ENCODE measurements at regions of chr1 and their contacts with region 1.

Region 1: DNA sequence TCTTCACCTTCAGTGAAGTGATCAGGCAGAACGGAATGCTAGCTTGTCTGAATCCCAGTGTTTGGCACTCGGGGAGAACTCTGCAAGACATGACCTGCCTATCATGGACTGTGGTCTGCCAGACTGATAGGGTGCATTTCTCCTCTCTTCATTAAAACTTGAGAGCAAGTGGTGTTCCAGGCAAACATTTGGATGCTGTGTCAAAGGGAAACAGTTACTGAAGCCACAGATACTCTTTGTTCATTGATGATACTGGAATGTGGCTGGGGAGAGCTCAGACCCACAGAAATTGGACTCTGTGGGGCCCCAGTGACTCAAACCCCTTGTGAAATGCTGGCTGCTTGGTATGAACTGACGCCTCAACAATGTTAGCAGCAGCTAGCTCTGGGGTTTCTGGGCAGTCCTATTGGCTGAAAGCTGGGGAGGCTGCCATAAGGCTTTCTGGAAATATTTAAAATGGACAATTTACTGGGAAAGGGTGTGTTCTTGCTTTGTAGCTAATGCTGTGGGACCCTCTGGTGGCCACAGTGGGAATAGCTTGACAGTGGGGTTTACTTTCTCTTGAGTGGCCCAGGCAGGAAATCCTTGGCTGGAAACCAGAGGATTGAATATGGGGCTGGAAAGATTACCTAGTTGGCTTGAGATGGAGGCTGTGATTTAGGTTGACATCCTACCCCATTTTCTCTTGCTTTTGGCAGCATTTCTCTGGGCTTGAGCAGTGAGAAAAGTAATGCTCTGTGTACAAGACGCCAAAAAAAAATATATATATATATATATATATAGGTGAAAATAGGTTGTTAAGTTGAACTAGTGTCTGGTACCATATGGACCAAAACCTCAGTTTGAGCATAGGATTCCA is 8.0 kb upstream of the S100A10 start:
- DNase-seq: peak; percentile 91
- H3K4me3 ChIP-seq: no peak overlapping the region
- H3K27me3 ChIP-seq: peaks cover 18% of the 10 kb centered on the region
- CTCF ChIP-seq: peak; percentile 92

Region 2: GRCh38 chr1:151820940-151821339 is 180.7 kb before region 1 on chr1:
- CTCF ChIA-PET with region 1: no interaction called
- POLR2A ChIA-PET with region 1: no interaction called
- DNase-seq: no peak
- H3K4me3 ChIP-seq: no peak overlapping the region
- H3K27me3 ChIP-seq: peaks cover 30% of the 10 kb centered on the region
- CTCF ChIP-seq: no peak

Region 3: DNA sequence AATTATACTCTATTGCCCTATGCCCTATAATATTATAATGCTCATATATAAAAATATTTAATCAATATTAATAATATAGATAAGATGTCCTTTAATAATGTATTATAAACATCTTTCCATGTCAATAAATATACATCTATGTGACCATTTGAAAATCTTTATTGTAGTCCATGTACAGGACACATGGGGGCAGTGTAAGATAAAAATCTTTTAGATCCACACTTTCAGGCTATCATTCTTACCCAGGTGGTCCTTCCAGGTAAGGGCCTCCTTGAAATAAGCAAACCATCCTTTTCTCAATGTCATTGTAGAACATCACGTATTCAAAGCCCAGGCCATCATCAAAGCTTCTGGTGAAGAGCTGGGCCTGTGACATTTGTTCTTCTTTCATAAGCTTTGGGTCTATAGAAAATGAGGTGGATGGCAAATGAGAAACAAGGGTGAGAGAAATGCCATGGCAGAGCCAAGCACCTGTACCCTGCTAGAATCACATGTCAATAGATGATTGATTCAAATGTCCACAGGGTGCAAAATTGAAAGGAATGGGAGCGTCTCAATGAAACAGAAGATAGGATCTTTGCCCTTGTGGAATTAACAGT is 112.5 kb before region 1 on chr1:
- CTCF ChIA-PET with region 1: interaction called, 11 read pairs
- POLR2A ChIA-PET with region 1: no interaction called
- DNase-seq: no peak
- H3K4me3 ChIP-seq: no peak overlapping the region
- H3K27me3 ChIP-seq: no peaks in the 10 kb centered on the region
- CTCF ChIP-seq: no peak

Region 4: DNA sequence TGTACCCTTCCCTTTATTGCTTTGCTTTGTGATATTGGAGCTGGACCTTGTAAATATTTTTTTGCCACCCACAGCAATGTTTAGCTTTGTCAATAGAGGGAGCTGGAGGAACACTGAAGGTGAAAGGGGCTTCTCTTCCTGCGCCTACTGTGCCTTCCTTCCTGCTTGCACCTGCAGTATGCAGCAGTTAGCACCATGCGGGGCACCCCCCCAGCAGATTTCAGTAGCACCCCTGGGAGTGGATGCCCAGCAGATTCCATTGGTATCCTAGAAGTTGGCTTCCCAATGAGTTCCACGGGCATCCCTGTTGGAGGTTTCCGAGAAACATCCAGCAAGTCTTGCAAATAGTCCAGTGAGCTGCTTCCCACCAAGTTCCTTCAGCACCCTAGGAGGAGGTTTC is 33.6 kb before region 1 on chr1:
- CTCF ChIA-PET with region 1: interaction called, 299 read pairs
- POLR2A ChIA-PET with region 1: no interaction called
- DNase-seq: no peak
- H3K4me3 ChIP-seq: no peak overlapping the region
- H3K27me3 ChIP-seq: no peaks in the 10 kb centered on the region; the same call in 1 of the 2 replicates
- CTCF ChIP-seq: peak; percentile 77

Region 5: GRCh38 chr1:151989211-151989862 is 12.3 kb before region 1 on chr1:
- CTCF ChIA-PET with region 1: interaction called, 30 read pairs
- POLR2A ChIA-PET with region 1: no interaction called
- DNase-seq: peak; percentile 55
- H3K4me3 ChIP-seq: no peak overlapping the region
- H3K27me3 ChIP-seq: no peaks in the 10 kb centered on the region
- CTCF ChIP-seq: no peak

Region 6: GRCh38 chr1:152034646-152035405 is 33.2 kb after region 1 on chr1:
- CTCF ChIA-PET with region 1: interaction called, 15 read pairs
- POLR2A ChIA-PET with region 1: no interaction called
- DNase-seq: no peak
- H3K4me3 ChIP-seq: peak overlapping the region; percentile 92
- H3K27me3 ChIP-seq: no peaks in the 10 kb centered on the region; the same call in 1 of the 2 replicates
- CTCF ChIP-seq: peak; percentile 78

Region 7: GRCh38 chr1:152227310-152227928 is 225.8 kb after region 1 on chr1:
- CTCF ChIA-PET with region 1: no interaction called
- POLR2A ChIA-PET with region 1: no interaction called
- DNase-seq: no peak
- H3K4me3 ChIP-seq: no peak overlapping the region
- H3K27me3 ChIP-seq: no peaks in the 10 kb centered on the region
- CTCF ChIP-seq: peak; percentile 18; the same call in 1 of the 2 replicates